AG04450 (cell line): ENCODE measurements at regions of chr11 and their contacts with region 1.

Region 1: GRCh38 chr11:65225279-65226102 is 36.3 kb upstream of the POLA2 start:
- DNase-seq: peak; percentile 6
- H3K4me3 ChIP-seq: peak overlapping the region; percentile 53
- H3K27ac ChIP-seq: peak overlapping the region; percentile 75
- H3K27me3 ChIP-seq: no peaks in the 10 kb centered on the region
- CTCF ChIP-seq: peak; percentile 65

Region 2: GRCh38 chr11:65169164-65169641 is 56.3 kb before region 1 on chr11:
- CTCF ChIA-PET with region 1: no interaction called
- POLR2A ChIA-PET with region 1: no interaction called
- DNase-seq: no peak
- H3K4me3 ChIP-seq: no peak overlapping the region
- H3K27ac ChIP-seq: peak overlapping the region; percentile 75
- H3K27me3 ChIP-seq: no peaks in the 10 kb centered on the region
- CTCF ChIP-seq: no peak

Region 3: GRCh38 chr11:65261591-65262380 is 36.3 kb after region 1 on chr11 and contains the start of gene POLA2:
- CTCF ChIA-PET with region 1: interaction called, 16 read pairs
- POLR2A ChIA-PET with region 1: no interaction called
- DNase-seq: peak; percentile 86
- H3K4me3 ChIP-seq: peak within 1 kb of the TSS; percentile 83
- H3K27ac ChIP-seq: peak within 1 kb of the TSS; percentile 84
- H3K27me3 ChIP-seq: no peaks in the 10 kb centered on the region
- CTCF ChIP-seq: no peak
- polyA plus RNA-seq, gene POLA2: 10.4 and 14.1 TPM in 2 replicates